Mammary epithelial cell (primary cell): ENCODE measurements at regions of chr10 and their contacts with region 1.

Region 1: DNA sequence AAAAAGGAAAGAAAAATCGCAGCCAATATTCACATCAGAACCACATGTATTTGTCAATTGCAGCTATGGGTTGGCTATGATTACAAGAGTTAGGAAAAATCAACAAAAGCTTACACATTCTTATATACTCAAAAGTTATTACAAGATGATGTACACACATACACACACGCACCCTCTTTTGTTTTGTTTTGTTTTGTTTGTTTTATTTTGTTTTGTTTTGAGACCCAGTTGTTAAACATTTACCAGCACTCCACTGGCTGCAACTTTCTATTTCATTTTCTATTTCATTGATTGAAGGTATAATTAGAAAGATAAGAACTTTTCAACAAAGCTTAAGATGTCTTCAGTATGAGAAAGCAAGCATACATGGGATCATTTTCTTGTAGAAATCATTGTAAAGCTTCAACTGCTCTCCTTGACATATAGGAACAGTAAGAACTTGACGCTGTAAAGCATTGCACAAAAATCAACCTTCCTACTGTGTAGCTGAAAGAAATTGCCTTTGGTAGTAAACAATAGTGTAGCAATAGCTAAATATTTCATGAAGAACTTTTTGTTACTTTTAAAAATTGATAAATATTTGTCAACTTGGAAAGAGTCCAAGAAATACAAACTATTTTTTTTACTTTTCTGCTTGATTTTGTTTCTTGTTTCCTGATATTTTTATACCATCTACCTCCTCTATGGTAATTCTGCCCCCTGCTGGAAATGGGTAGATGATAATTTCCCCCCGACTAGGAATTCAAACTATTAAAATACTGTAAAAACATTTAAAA is 205.9 kb downstream of the MBL2 start:
- DNase-seq: peak; percentile 35
- H3K4me3 ChIP-seq: no peak overlapping the region
- H3K27ac ChIP-seq: no peak overlapping the region
- H3K4me1 ChIP-seq: peaks cover 4% of the 10 kb centered on the region
- H3K27me3 ChIP-seq: no peaks in the 10 kb centered on the region
- CTCF ChIP-seq: peak; percentile 55 to 68

Region 2: DNA sequence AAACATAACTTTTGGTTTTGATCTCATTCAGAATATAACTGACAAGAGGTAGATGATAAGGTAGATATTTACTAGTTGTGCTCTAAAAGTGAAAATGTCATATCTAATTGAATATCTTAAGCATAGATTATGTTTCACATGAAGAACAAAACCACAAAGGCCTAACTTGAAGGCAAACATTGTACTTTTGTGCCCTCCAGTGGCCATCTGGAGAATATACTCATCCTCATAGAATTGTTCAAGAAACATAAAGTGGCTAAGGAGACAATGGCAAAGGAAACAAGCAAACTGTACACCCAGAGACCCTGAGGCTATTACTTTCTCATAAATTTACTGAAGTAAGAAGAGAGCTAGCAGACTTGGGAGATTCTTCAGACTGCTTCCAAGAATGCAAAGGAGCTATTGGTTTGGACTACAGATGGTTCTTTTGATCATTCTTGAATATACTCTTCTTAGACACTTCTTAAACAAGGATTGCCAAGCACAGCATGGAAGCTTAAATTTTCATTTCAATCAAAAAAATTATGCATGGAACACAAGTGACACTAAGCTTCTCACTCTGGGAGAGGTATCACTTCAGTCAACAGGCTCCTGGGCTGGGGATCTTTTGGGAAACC is 350.8 kb before region 1 on chr10:
- CTCF ChIA-PET with region 1: no interaction called
- dilution Hi-C with region 1: no loop called
- in situ Hi-C with region 1: no loop called
- intact Hi-C with region 1: loop called (anchors 5 kb)
- DNase-seq: peak; percentile 57
- H3K4me3 ChIP-seq: no peak overlapping the region
- H3K27ac ChIP-seq: no peak overlapping the region
- H3K4me1 ChIP-seq: no peaks in the 10 kb centered on the region
- H3K27me3 ChIP-seq: no peaks in the 10 kb centered on the region
- CTCF ChIP-seq: peak; percentile 66 to 68

Region 3: DNA sequence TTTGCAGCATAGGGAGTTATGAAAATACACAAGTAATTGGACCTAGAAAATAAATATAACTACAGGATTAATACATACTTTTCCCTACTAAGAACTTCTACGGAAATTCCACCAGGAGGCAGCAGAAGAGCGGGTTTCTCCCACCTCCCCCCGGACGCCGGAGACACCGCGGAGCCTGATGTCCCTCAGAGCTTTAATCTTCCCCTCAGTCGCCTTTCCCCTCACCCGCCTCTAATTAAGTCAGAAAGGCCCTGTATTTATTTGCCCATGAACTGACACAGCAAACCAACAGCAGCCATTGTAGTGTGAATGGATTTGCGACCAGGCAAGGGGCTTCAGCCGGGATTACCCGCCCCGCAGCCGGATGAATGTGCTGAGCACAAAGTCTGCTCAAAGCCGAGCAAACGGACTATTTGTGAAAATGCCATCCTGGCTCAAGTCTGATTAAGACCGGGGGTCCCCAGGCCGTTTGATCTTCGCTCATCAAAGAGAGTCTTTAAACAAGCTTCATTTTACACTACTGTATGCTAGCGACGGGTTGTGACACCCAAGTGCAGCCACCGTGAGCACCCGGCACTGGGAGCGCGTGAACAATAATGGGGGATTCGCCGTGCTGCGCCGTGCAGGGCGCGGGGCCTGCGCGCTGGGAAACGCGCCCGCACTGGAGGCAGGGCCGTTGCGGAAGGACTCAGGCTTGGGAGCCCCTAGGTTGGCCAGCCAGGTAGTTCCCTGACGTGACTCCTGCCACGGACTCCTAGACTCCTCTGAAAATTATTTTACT is 258.2 kb before region 1 on chr10:
- CTCF ChIA-PET with region 1: interaction called, 10 read pairs
- dilution Hi-C with region 1: loop called (anchors 25 kb)
- in situ Hi-C with region 1: loop called (anchors 5 kb)
- intact Hi-C with region 1: loop called (anchors 1 kb)
- DNase-seq: peak; percentile 45
- H3K4me3 ChIP-seq: peak overlapping the region; percentile 42 to 50 (median 45)
- H3K27ac ChIP-seq: peak overlapping the region; percentile 40
- H3K4me1 ChIP-seq: peaks cover 17% of the 10 kb centered on the region
- H3K27me3 ChIP-seq: no peaks in the 10 kb centered on the region
- CTCF ChIP-seq: peak; percentile 46 to 72

Region 4: DNA sequence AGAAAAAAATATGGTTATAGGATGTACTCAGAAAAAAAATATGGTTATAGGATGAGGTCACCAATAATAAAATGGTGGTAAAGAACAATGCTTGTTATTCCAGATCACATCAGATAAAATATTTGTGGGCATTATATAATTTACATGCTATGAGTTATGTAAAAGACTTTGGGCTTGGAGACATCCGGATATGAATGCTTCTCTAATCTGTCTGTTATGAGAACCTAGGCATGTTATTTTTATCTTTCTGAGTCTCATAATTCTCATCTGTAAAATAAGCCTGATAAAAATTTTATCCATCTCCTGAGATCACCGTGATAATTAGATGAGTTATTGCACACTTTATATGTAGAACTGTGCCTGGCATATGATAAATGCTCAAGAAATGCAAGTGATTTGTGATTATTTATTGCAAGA is 214.7 kb before region 1 on chr10:
- CTCF ChIA-PET with region 1: no interaction called
- dilution Hi-C with region 1: no loop called
- in situ Hi-C with region 1: no loop called
- intact Hi-C with region 1: no loop called
- DNase-seq: peak; percentile 64
- H3K4me3 ChIP-seq: no peak overlapping the region
- H3K27ac ChIP-seq: no peak overlapping the region
- H3K4me1 ChIP-seq: peaks cover 16% of the 10 kb centered on the region
- H3K27me3 ChIP-seq: no peaks in the 10 kb centered on the region
- CTCF ChIP-seq: no peak

Region 5: DNA sequence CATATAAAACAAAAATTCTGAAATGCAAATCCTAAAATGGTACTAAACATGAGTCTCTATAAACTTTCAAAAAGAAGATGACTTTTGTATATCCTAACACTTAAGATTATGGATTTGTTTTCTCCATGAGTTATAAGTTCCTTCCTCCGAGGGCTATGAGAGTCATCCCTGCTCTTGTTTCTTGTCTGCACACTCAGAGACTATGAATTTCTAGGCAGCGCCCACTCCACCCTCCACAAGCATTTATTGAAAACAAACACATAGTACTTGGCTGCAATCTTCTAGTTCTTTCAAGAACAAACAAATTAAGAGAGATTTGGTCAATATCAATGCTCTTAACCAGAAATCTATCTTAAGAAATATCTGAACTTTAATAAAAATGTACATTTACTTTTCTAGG is 40.9 kb before region 1 on chr10:
- CTCF ChIA-PET with region 1: no interaction called
- dilution Hi-C with region 1: no loop called
- in situ Hi-C with region 1: no loop called
- intact Hi-C with region 1: loop called (anchors 5 kb)
- DNase-seq: peak; percentile 54
- H3K4me3 ChIP-seq: no peak overlapping the region
- H3K27ac ChIP-seq: peak overlapping the region; percentile 33
- H3K4me1 ChIP-seq: peaks cover 12% of the 10 kb centered on the region
- H3K27me3 ChIP-seq: no peaks in the 10 kb centered on the region
- CTCF ChIP-seq: no peak